Activated CD8-positive, alpha-beta T cell treated with anti-CD3 and anti-CD28 coated beads, Interleukin-2, amount 10 ng/mL, durations not matched to agents 7 days and 5 days (primary cell): ENCODE measurements at regions of chr12 and their contacts with region 1.

Region 1: GRCh38 chr12:53476769-53477209 is 22.5 kb downstream of the MAP3K12 start:
- DNase-seq: no peak
- ATAC-seq: no peak
- H3K4me3 Mint-ChIP-seq: no peak overlapping the region
- H3K27ac Mint-ChIP-seq: peak overlapping the region; percentile 43
- H3K4me1 Mint-ChIP-seq: peaks cover 40% of the 10 kb centered on the region
- H3K27me3 Mint-ChIP-seq: no peaks in the 10 kb centered on the region

Region 2: DNA sequence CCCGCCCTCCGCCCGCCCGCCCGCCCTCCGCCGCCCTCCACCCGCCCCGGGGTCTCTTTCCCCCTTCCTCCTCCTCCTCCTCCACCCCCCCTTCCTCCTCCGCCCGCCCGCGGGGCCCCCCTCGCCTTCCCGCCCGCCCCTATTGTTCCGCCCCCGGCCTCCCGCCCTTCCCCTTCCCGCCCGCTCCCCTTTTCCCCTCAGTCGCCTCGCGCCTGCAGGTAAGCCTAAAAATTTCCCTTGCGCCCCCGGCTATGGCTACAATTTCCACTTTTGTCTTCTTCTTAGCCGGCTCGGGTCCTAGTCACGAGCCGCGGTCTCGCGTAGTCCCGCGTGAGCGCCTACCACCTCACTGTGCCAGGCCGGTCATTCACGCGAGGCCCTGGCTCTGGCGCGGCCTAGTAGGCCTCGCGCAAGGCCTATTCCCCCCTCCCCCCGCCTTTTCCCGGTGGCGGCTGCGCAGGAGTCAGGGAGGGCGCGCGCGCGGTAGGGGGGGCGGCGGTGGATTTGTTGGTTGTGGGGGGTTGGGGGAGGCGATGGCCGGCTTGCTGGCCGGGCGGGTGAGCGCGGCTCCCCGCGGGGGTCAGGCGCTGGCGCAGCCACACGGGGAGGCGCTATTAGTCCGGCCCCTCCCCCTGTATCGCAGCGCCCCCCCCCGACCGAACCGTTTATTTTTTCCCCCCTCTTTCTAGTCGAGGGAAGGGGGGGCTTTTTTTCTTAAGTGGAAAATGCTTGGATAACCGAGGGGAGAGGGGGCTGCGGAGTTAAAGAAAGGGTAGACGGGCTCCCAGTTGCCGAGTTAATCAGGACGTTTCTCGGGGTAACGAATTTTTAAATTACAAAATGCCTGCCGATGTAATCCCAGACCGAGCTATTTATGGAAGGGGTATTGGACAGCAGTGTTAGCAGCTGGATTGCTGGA is 24.4 kb before region 1 on chr12:
- CTCF ChIA-PET with region 1: interaction called, 18 read pairs
- POLR2A ChIA-PET with region 1: interaction called, 16 read pairs
- DNase-seq: peak; percentile 80
- ATAC-seq: peak; percentile 29
- H3K4me3 Mint-ChIP-seq: peak overlapping the region; percentile 94
- H3K27ac Mint-ChIP-seq: peak overlapping the region; percentile 100
- H3K4me1 Mint-ChIP-seq: peaks cover 39% of the 10 kb centered on the region
- H3K27me3 Mint-ChIP-seq: no peaks in the 10 kb centered on the region

Region 3: DNA sequence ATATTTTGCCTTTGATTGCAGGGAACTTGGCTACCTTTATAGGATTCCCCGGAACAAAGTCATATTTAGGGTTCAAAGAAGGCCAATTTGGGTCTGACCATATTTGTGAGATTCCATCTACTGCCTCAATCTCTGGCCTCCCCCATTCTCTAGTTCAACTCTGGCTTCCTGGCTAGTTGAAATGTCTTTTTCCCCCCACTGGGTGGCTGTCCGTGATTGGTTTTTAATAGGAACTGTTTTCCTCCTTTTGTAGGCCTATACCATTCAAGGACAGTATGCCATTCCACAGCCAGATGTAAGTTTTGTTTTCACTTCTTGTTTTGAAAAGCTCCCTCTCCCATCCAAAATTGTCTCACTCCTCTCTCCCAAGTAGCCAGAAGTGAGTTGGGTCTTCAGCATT is 11.1 kb before region 1 on chr12:
- CTCF ChIA-PET with region 1: interaction called, 15 read pairs
- POLR2A ChIA-PET with region 1: interaction called, 4 read pairs
- DNase-seq: no peak
- ATAC-seq: no peak
- H3K4me3 Mint-ChIP-seq: no peak overlapping the region
- H3K27ac Mint-ChIP-seq: no peak overlapping the region
- H3K4me1 Mint-ChIP-seq: peaks cover 21% of the 10 kb centered on the region
- H3K27me3 Mint-ChIP-seq: no peaks in the 10 kb centered on the region

Region 4: GRCh38 chr12:53500776-53501614 is 24.2 kb after region 1 on chr12 and contains the start of gene TARBP2:
- CTCF ChIA-PET with region 1: interaction called, 11 read pairs
- POLR2A ChIA-PET with region 1: interaction called, 14 read pairs
- DNase-seq: peak; percentile 97
- ATAC-seq: peak; percentile 84
- H3K4me3 Mint-ChIP-seq: peak within 1 kb of the TSS; percentile 81
- H3K27ac Mint-ChIP-seq: peak within 1 kb of the TSS; percentile 94
- H3K4me1 Mint-ChIP-seq: peaks cover 43% of the 10 kb centered on the region
- H3K27me3 Mint-ChIP-seq: no peaks in the 10 kb centered on the region
- total RNA-seq, gene TARBP2: 30.3 to 36.9 TPM